Activated T-helper 1 cell treated with anti-CD3 and anti-CD28 coated beads, Interleukin-12 subunit alpha, Interleukin-12 subunit beta, Interleukin-2, Interleukin-4 antibody, amounts not matched to agents 30 ng/mL and 10 ng/mL and 1 ng/mL, durations not matched to agents 14 hours and 24 hours and 36 hours (primary cell): ENCODE measurements at regions of chr10 and their contacts with region 1.

Region 1: DNA sequence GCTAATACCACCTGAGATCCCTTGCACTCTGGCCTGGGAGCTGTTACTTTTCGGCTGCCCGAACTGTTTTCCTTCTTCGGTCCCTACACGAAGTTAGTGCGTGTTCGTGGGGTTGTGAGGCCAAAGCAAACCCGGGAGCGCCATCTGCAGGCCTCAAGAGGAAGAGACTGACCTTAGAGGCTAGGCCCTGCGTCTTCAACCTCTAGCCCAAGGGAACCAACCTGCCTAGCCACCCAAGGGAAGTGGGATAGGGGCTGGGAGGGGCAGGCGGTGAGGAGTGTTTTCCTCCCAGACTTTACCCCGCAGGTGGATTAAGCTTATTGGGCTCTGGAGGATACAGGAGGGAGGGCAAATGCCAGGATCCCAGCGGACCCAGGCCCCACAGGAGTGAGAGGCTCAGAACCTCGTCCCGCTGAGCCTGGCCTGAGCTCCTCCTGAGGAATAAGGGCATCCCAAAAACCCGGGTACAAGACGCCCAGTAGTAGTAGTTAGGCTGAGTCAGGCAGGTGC is 1.7 kb upstream of the PAX2 start:
- DNase-seq: peak; percentile 19
- H3K4me3 Mint-ChIP-seq: no peak overlapping the region
- H3K27ac Mint-ChIP-seq: peak overlapping the region; percentile 55
- H3K4me1 Mint-ChIP-seq: peaks cover 15% of the 10 kb centered on the region
- H3K27me3 Mint-ChIP-seq: peaks cover 77% of the 10 kb centered on the region

Region 2: GRCh38 chr10:99532687-99533495 is 1210.8 kb before region 1 on chr10 and contains the start of gene NKX2-3:
- intact Hi-C with region 1: loop called (anchors 10 kb)
- DNase-seq: peak; percentile 6
- H3K4me3 Mint-ChIP-seq: peak within 1 kb of the TSS; percentile 22
- H3K27ac Mint-ChIP-seq: peak within 1 kb of the TSS; percentile 73
- H3K4me1 Mint-ChIP-seq: peaks cover 47% of the 10 kb centered on the region
- H3K27me3 Mint-ChIP-seq: peaks cover 87% of the 10 kb centered on the region
- total RNA-seq, gene NKX2-3: not detected in 2 replicates

Region 3: DNA sequence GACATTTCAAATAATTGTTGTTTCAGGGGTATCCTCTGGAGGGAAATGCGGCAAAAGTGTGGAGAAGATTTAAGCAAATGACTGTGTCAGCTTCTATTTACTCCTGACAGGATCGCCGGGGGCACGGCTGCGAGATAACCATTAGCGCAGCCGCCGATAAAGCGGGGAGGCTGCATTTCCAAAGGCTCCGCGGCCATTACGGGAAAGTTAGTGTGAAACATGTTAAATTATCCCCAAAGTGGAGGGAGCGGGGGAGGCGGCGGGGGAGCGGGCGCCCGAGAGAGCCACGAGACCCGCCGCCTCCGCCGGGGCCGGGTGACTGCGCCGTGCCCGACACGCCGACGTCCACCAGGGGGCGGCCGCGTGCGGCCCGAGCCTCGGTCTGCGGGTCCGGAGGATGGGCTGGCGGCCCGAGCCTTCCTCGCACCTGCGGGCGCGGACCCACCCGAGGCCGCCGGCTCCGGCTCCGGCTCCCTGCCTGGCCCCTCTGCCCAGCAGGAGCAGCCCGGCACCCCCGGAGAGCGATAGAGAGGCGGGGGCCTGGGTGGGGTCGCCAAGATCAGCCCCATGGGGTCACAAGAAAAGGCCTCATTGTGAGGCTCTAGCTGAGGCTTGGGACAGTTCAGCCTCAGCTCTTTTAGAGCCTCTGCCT is 72.7 kb before region 1 on chr10:
- intact Hi-C with region 1: loop called (anchors 1 kb)
- DNase-seq: peak; percentile 57
- H3K4me3 Mint-ChIP-seq: peak overlapping the region; percentile 60
- H3K27ac Mint-ChIP-seq: no peak overlapping the region
- H3K4me1 Mint-ChIP-seq: peaks cover 9% of the 10 kb centered on the region
- H3K27me3 Mint-ChIP-seq: peaks cover 69% of the 10 kb centered on the region

Region 4: GRCh38 chr10:100710151-100710871 is 33.4 kb before region 1 on chr10:
- intact Hi-C with region 1: no loop called
- DNase-seq: no peak
- H3K4me3 Mint-ChIP-seq: no peak overlapping the region
- H3K27ac Mint-ChIP-seq: no peak overlapping the region
- H3K4me1 Mint-ChIP-seq: peaks cover 4% of the 10 kb centered on the region
- H3K27me3 Mint-ChIP-seq: peaks cover 67% of the 10 kb centered on the region

Region 5: DNA sequence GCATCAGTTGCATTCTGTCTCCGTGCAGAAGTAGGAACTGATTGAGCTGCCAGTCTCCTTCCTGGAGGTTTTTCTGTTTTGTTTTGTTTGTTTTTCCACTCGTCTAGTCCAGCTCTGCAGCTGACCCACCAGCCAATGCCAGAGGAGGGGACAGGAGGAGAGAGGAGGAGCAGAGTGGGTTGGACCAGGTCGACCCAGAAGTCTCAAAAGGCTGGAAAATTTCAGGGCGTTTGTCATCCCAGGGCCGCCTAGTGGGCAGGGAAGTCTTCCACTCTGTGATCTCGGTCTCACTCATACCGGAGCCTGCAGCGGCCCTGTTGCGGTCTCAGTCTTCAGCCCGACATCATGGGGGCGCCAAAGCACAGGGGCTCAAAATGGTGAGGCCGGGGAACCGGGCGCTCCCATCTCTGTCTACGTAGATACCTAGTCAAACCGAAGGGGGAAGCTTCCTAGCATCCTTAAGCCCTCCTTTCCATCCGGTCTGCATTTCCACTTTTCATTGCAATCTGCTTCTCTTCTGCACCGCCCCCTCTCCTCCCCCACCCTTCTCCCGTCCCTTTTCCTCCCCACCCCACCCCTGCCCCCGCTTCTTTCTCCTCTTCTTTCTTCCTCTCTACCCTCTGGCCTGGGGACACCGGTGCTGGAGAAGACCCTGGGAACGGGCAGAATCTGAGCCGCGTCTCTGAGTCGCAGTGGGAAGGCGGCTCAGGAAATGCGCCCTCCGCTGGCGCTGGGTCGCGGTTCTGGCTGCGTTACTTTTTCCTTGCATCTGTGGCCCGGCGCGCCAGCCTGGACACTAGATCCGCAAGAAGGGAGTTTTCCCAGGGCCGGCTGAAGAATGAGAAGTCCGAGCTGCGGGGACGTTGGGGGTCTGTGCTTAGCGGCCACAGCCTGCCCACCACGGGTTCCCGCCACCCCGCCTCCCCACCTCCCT is 14.5 kb before region 1 on chr10:
- intact Hi-C with region 1: loop called (anchors 2 kb)
- DNase-seq: no peak
- H3K4me3 Mint-ChIP-seq: no peak overlapping the region
- H3K27ac Mint-ChIP-seq: no peak overlapping the region
- H3K4me1 Mint-ChIP-seq: peaks cover 24% of the 10 kb centered on the region
- H3K27me3 Mint-ChIP-seq: peaks cover 89% of the 10 kb centered on the region

Region 6: GRCh38 chr10:100775386-100775785 is 31.7 kb after region 1 on chr10:
- intact Hi-C with region 1: no loop called
- DNase-seq: no peak
- H3K4me3 Mint-ChIP-seq: no peak overlapping the region
- H3K27ac Mint-ChIP-seq: no peak overlapping the region
- H3K4me1 Mint-ChIP-seq: no peaks in the 10 kb centered on the region
- H3K27me3 Mint-ChIP-seq: peaks cover 25% of the 10 kb centered on the region

Region 7: DNA sequence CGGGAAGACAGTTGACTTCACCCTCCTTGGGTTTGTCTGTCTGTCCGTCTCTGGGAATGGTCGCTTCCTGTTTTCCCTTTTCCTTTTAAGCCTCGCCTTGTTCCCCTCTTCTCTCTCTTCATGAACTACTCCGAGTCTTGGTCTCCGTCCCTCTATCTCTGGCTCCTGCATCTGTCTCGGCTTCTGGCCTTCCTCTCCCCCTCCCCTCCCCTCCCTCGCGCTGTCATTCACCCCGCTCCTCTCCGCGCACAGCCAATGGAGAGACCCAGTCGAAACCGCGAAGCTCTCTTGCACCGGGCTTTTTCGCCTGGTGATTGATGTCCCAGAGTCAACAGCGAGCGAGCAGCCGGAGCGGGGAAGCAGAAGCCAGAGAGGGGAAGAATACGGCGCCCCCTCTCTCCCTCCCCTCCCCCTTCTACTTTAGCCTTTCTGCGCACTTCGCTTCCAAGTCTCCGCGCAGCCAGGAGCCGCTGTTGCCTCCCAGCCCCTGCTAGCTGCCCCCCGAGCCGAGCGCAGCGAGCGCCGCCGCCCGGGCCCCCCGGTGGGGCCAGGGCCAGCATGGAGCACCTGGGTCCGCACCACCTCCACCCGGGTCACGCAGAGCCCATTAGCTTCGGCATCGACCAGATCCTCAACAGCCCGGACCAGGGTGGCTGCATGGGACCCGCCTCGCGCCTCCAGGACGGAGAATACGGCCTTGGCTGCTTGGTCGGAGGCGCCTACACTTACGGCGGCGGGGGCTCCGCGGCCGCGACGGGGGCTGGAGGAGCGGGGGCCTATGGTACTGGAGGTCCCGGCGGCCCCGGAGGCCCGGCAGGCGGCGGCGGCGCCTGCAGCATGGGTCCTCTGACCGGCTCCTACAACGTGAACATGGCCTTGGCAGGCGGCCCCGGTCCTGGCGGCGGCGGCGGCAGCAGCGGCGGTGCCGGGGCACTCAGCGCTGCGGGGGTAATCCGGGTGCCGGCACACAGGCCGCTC is 387.6 kb after region 1 on chr10 and contains the start of gene TLX1:
- intact Hi-C with region 1: loop called (anchors 2 kb)
- DNase-seq: no peak
- H3K4me3 Mint-ChIP-seq: no peak within 1 kb of the TSS
- H3K27ac Mint-ChIP-seq: no peak within 1 kb of the TSS
- H3K4me1 Mint-ChIP-seq: peaks cover 8% of the 10 kb centered on the region
- H3K27me3 Mint-ChIP-seq: peaks cover 87% of the 10 kb centered on the region
- total RNA-seq, gene TLX1: not detected in 2 replicates

Region 8: GRCh38 chr10:101297901-101298486 is 554.3 kb after region 1 on chr10:
- intact Hi-C with region 1: loop called (anchors 10 kb)
- DNase-seq: peak; percentile 46
- H3K4me3 Mint-ChIP-seq: no peak overlapping the region
- H3K27ac Mint-ChIP-seq: no peak overlapping the region
- H3K4me1 Mint-ChIP-seq: no peaks in the 10 kb centered on the region
- H3K27me3 Mint-ChIP-seq: peaks cover 48% of the 10 kb centered on the region